ENCODE measurements at regions of chr4 and their contacts with region 1.

Region 1: DNA sequence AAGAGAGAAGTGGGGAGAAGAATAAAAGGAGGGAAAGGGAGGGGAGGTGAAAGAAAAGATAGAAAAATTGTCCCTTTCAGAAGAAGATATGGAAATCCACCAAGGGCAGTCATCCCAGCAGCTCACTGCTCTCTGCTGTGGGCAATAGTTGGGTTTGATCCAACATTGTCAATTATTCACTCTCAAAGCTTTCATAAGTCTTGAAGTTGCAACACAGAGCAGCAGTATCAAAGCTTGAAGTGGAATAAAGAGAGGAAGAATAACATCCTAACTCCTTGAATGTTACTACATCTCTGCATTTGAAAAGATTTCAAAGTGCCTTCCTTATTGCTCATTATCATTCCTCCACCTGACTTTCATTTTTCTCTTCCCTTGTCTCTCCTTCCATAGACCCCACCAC is 62.3 kb upstream of the HHIP start:
- DNase-seq: no peak
- H3K4me3 ChIP-seq: no peak overlapping the region
- H3K27ac ChIP-seq: no peak overlapping the region
- H3K4me1 ChIP-seq: no peaks in the 10 kb centered on the region
- H3K27me3 ChIP-seq: no peaks in the 10 kb centered on the region
- CTCF ChIP-seq: no peak

Region 2: DNA sequence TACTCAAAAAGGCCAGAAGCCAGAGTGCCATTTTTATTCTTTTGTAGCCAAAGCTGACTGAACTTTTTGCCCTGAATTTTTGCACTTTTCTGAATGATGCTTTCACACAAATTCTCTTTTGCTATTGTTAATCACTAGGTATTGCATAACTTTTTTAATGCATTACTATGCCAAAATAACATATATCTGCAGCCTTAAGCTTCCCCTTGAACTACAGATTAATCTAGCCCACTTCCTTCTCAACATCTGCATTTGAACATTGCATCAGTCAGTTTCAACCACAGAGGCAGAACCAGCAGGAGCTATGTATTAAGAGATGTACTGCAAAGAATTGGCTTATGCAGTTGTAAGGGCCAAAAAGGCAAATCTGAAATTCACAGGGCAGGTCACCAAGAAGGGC is 245.5 kb before region 1 on chr4:
- CTCF ChIA-PET with region 1: no interaction called
- POLR2A ChIA-PET with region 1: no interaction called
- intact Hi-C with region 1: loop called (anchors 5 kb)
- DNase-seq: no peak
- H3K4me3 ChIP-seq: no peak overlapping the region
- H3K27ac ChIP-seq: peak overlapping the region; percentile 74
- H3K4me1 ChIP-seq: peaks cover 6% of the 10 kb centered on the region; the same call in 1 of the 2 replicates
- H3K27me3 ChIP-seq: no peaks in the 10 kb centered on the region
- CTCF ChIP-seq: no peak

Region 3: GRCh38 chr4:144734522-144734921 is 150.9 kb after region 1 on chr4:
- CTCF ChIA-PET with region 1: no interaction called
- POLR2A ChIA-PET with region 1: no interaction called
- intact Hi-C with region 1: loop called (anchors 5 kb)
- DNase-seq: peak in 1 of 2 experiments; percentile 39
- H3K4me3 ChIP-seq: no peak overlapping the region
- H3K27ac ChIP-seq: no peak overlapping the region
- H3K4me1 ChIP-seq: no peaks in the 10 kb centered on the region
- H3K27me3 ChIP-seq: no peaks in the 10 kb centered on the region
- CTCF ChIP-seq: no peak